ENCODE measurements at regions of chr15 and their contacts with region 1.

Region 1: GRCh38 chr15:48555241-48555881 is 90.1 kb downstream of the FBN1 start:
- DNase-seq: peak; percentile 88
- ATAC-seq: peak; percentile 69
- H3K4me3 ChIP-seq: no peak overlapping the region
- H3K27ac ChIP-seq: peak overlapping the region; percentile 28
- H3K4me1 ChIP-seq: peaks cover 21% of the 10 kb centered on the region
- H3K27me3 ChIP-seq: no peaks in the 10 kb centered on the region
- CTCF ChIP-seq: no peak
- POLR2A ChIP-seq: no peak
- RAD21 ChIP-seq: no peak

Region 2: GRCh38 chr15:48520376-48521155 is 34.8 kb before region 1 on chr15:
- CTCF ChIA-PET with region 1: no interaction called
- POLR2A ChIA-PET with region 1: no interaction called
- dilution Hi-C with region 1: no loop called
- in situ Hi-C with region 1: no loop called
- intact Hi-C with region 1: no loop called
- DNase-seq: no peak
- ATAC-seq: no peak
- H3K4me3 ChIP-seq: no peak overlapping the region
- H3K27ac ChIP-seq: no peak overlapping the region
- H3K4me1 ChIP-seq: no peaks in the 10 kb centered on the region
- H3K27me3 ChIP-seq: no peaks in the 10 kb centered on the region
- CTCF ChIP-seq: no peak
- POLR2A ChIP-seq: no peak
- RAD21 ChIP-seq: no peak

Region 3: GRCh38 chr15:48541341-48542278 is 13.8 kb before region 1 on chr15:
- CTCF ChIA-PET with region 1: interaction called, 3 read pairs
- POLR2A ChIA-PET with region 1: no interaction called
- dilution Hi-C with region 1: no loop called
- in situ Hi-C with region 1: no loop called
- intact Hi-C with region 1: loop called (anchors 1 kb)
- DNase-seq: peak; percentile 88
- ATAC-seq: peak; percentile 86
- H3K4me3 ChIP-seq: peak overlapping the region; percentile 27; the same call in 1 of the 2 replicates
- H3K27ac ChIP-seq: peak overlapping the region; percentile 68
- H3K4me1 ChIP-seq: peaks cover 15% of the 10 kb centered on the region
- H3K27me3 ChIP-seq: no peaks in the 10 kb centered on the region
- CTCF ChIP-seq: no peak
- POLR2A ChIP-seq: no peak
- RAD21 ChIP-seq: peak; percentile 4; the same call in 1 of the 2 replicates